Common myeloid progenitor, CD34-positive (primary cell): ENCODE measurements at regions of chr9 and their contacts with region 1.

Region 1: GRCh38 chr9:130682490-130683121 is 11.0 kb upstream of the EXOSC2 start:
- DNase-seq: peak in 2 of 3 donors; percentile 44 to 57
- H3K4me3 ChIP-seq: peak overlapping the region in 6 of 7 experiments; percentile 26 to 67 (median 58)
- H3K27ac ChIP-seq: no peak overlapping the region
- H3K4me1 ChIP-seq: peaks cover 0 to 16% (median 14%) of the 10 kb centered on the region in 4 experiments
- H3K27me3 ChIP-seq: peaks cover 0 to 51% (median 14%) of the 10 kb centered on the region in 5 experiments

Region 2: DNA sequence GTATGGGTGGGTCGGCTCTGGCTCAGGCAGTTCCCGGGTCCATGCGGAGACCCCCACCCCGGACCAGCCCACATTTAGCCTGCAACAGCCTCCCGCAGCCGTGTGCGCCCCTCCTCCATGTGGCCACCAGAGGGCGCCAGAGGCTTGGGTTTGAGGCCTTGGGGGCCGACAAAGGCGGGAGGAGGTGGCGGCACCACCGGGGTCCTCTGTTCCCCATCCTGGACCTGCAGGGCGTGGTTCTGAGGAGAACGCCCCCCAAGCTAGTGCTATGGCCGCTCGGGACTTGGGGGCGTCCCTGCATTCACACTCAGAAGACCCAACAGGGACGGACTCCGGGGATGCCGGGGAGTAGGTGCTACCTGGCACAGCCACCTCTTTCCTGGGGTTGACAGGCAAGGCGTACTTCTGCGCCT is 221.4 kb before region 1 on chr9:
- CTCF ChIA-PET with region 1: interaction called, 171 read pairs
- POLR2A ChIA-PET with region 1: no interaction called
- DNase-seq: peak; percentile 50 to 73 (median 71)
- H3K4me3 ChIP-seq: no peak overlapping the region
- H3K27ac ChIP-seq: no peak overlapping the region
- H3K4me1 ChIP-seq: no peaks in the 10 kb centered on the region
- H3K27me3 ChIP-seq: peaks cover 0 to 81% (median 9%) of the 10 kb centered on the region in 5 experiments

Region 3: DNA sequence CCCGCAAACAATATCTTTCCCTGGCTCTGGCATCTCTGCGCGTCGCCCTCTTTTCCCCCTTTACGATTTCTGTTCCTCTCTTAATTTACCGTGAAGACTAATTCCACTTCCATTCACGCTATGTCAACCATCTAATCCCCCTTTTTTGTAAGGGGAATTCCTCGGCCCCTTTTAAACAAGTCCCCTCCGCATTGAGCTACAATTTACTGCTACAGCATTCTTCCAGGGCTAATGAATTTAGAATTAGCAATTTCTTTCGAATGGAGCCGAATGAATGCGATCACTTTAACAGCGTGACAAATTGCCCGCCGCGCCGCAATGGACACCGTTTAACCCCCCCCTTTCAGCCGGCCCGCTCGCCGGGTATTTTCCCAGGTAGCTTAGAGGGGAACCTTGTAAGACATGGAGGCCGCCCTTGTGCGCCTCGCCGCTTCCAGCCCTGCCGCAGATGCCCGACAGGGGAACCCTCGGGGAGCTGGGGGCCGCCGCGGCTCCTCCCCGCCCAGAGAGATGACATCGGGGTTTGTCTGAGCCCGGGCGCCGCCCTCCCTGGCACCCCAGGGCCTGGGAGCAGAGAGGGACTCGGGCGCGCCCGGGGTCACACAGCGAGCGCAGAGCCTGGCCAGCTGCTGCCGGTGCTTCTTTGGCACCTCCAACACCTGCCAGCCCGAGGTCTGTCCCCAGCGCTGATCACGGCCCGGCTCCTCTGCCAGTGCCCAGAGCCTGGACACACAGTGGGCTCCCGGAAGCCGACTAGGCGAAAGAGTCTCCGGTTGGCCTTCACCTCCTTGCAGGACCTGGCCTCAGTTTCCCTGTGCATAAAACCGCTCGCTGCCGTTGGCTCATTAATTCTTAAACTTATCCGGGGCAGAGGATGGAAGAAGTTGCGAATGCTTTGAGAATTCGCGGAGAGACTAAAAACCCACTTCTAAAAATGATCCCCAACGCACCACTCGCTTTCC is 16.9 kb before region 1 on chr9:
- CTCF ChIA-PET with region 1: interaction called, 10 read pairs
- POLR2A ChIA-PET with region 1: no interaction called
- DNase-seq: peak in 2 of 3 donors; percentile 53 to 61
- H3K4me3 ChIP-seq: no peak overlapping the region
- H3K27ac ChIP-seq: no peak overlapping the region
- H3K4me1 ChIP-seq: peaks cover 0 to 50% (median 20%) of the 10 kb centered on the region in 4 experiments
- H3K27me3 ChIP-seq: peaks cover 0 to 91% (median 57%) of the 10 kb centered on the region in 5 experiments